ENCODE measurements at regions of chr7 and their contacts with region 1.

Region 1: DNA sequence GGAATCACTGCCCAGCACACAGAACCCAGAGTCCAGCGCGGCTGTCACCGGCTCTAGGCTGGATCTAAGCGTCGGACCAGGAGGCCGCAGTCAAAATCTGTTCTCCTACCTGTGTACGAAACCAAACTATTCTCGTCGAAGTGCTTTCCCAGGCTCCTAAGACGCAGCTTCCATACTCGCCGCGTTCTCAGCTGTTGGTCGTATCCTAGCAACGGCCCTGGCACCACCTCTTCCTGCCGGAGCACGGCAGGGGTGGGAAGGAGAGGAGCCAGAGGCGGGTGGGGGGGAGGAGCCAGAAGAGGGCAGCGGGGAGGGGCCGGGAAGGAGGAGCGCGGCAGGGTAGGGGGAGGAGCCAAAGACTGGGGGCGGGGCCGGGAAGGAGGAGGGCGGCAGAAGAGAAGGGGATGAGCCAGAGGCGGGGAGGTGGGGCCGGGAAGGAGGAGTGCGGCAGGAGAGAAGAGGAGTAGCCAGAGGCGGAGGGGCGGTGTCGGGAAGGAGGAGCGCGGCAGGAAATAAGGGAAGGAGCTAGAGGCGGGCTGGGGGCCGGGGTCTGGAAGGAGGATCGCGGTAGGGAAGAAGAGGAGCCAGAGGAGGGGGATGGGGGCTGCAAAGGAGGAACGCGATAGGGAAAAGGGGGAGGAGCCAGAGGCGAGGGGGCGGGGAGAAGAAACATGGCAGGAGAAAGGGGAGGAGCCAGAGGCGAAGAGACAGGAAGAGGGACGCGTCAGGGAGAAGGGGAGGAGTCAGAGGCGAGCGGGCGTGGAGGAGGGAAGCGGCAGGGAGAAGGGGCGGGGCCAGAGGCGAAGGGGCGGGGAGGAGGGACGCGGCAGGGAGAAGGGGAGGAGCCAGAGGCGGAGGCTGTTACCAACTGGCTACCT is at the start of gene IQUB:
- DNase-seq: peak; percentile 100
- H3K4me3 ChIP-seq: peak within 1 kb of the TSS; percentile 44
- H3K27ac ChIP-seq: peak within 1 kb of the TSS; percentile 69
- H3K4me1 ChIP-seq: no peaks in the 10 kb centered on the region
- H3K27me3 ChIP-seq: no peaks in the 10 kb centered on the region
- CTCF ChIP-seq: no peak
- total RNA-seq, gene IQUB: 0.16 TPM in 1 of 2 donors, not detected in the other

Region 2: DNA sequence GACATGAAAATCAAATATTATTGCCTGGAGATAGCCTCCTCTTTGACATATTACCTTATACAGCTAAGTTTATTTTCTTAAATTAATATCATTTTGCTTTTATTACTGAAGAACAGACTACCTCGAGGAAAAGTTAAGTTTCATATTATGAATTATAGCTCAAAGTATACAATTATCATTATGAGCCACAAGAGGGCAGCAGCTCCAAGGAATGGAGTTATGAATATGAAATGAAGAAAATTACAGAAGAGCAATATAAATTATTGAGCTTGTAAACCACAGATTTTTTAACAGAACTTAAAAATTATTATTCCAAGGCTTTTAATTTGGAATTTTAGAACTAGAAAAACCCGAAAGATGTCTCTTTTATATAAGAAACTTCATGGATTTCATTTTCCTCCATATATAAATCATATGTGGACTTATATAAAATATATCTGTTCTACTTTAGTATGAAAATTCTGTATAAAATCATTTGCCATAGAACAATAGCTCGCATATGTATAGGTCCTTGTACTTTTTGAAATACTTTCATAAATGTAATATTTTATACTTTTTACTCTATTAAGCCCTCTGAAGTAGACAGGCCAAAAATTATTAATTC is 40.3 kb before region 1 on chr7:
- intact Hi-C with region 1: loop called (anchors 5 kb)
- DNase-seq: peak; percentile 31
- H3K4me3 ChIP-seq: no peak overlapping the region
- H3K27ac ChIP-seq: no peak overlapping the region
- H3K4me1 ChIP-seq: no peaks in the 10 kb centered on the region
- H3K27me3 ChIP-seq: no peaks in the 10 kb centered on the region
- CTCF ChIP-seq: peak; percentile 63